CD8-positive, alpha-beta memory T cell (primary cell): ENCODE measurements at regions of chr3 and their contacts with region 1.

Region 1: DNA sequence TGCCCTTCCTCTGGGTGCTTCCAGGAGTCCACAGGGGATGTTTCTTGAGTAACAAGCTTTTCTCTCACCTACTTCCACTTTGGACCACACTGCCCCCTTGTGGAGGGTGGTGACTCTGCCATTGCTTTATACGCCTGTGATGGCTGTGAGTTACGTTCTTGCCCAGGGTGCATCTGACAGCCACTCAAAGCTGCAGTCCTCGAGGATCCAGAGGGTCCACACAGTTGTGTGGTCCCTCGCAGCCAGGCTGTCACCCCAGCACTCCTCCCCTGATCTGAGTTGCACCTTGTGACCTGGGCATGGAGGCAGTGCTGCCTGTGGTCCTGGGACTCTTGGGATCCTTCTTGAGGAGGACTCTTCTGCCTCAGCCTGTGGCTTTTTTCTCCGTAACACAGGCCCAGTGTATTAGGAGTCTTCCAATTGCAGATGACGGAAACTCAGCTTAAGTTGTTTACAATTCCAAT is 23.4 kb downstream of the FOXL2 start:
- DNase-seq: peak; percentile 68 to 85 (median 76)
- H3K4me3 ChIP-seq: no peak overlapping the region
- H3K4me3 Mint-ChIP-seq: no peak overlapping the region
- H3K27ac ChIP-seq: no peak overlapping the region
- H3K27ac Mint-ChIP-seq: no peak overlapping the region
- H3K4me1 ChIP-seq: no peaks in the 10 kb centered on the region
- H3K4me1 Mint-ChIP-seq: peaks cover 0 to 1% (median 0%) of the 10 kb centered on the region in 3 donors
- H3K27me3 ChIP-seq: no peaks in the 10 kb centered on the region
- H3K27me3 Mint-ChIP-seq: peaks cover 7 to 24% of the 10 kb centered on the region in 2 donors

Region 2: DNA sequence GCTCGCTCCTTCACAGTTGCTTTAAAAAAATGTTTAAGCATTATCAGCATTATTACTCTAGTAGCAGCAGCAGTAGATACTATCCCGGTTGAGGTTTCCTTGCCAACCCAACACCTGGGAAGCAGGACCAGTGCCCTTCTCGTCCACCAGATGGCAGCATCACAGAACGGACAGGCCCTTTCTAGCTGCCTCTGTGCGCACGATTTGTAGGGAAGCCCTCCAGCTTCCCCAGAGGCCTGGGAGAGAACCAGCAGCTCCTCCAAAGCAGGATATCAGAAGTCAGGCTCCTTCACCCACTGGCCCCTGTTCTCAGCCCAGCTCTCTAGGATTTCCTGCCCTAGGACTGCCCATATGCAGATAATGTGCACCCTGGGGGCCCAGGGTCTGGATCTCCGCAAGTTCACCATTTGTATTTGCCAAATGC is 506.0 kb before region 1 on chr3:
- CTCF ChIA-PET with region 1: interaction called, 46 read pairs
- POLR2A ChIA-PET with region 1: no interaction called
- DNase-seq: peak; percentile 17 to 67 (median 37)
- H3K4me3 ChIP-seq: no peak overlapping the region
- H3K4me3 Mint-ChIP-seq: no peak overlapping the region
- H3K27ac ChIP-seq: no peak overlapping the region
- H3K27ac Mint-ChIP-seq: no peak overlapping the region
- H3K4me1 ChIP-seq: peaks cover 4% of the 10 kb centered on the region
- H3K4me1 Mint-ChIP-seq: no peaks in the 10 kb centered on the region
- H3K27me3 ChIP-seq: peaks cover 4% of the 10 kb centered on the region
- H3K27me3 Mint-ChIP-seq: peaks cover 12 to 25% of the 10 kb centered on the region in 2 donors

Region 3: GRCh38 chr3:138694287-138695007 is 229.1 kb before region 1 on chr3:
- CTCF ChIA-PET with region 1: interaction called, 198 read pairs
- POLR2A ChIA-PET with region 1: no interaction called
- DNase-seq: no peak
- H3K4me3 ChIP-seq: no peak overlapping the region
- H3K4me3 Mint-ChIP-seq: no peak overlapping the region
- H3K27ac ChIP-seq: peak overlapping the region; percentile 33
- H3K27ac Mint-ChIP-seq: peak overlapping the region in 2 of 8 donors; percentile 24 to 26
- H3K4me1 ChIP-seq: no peaks in the 10 kb centered on the region
- H3K4me1 Mint-ChIP-seq: no peaks in the 10 kb centered on the region
- H3K27me3 ChIP-seq: no peaks in the 10 kb centered on the region
- H3K27me3 Mint-ChIP-seq: no peaks in the 10 kb centered on the region

Region 4: DNA sequence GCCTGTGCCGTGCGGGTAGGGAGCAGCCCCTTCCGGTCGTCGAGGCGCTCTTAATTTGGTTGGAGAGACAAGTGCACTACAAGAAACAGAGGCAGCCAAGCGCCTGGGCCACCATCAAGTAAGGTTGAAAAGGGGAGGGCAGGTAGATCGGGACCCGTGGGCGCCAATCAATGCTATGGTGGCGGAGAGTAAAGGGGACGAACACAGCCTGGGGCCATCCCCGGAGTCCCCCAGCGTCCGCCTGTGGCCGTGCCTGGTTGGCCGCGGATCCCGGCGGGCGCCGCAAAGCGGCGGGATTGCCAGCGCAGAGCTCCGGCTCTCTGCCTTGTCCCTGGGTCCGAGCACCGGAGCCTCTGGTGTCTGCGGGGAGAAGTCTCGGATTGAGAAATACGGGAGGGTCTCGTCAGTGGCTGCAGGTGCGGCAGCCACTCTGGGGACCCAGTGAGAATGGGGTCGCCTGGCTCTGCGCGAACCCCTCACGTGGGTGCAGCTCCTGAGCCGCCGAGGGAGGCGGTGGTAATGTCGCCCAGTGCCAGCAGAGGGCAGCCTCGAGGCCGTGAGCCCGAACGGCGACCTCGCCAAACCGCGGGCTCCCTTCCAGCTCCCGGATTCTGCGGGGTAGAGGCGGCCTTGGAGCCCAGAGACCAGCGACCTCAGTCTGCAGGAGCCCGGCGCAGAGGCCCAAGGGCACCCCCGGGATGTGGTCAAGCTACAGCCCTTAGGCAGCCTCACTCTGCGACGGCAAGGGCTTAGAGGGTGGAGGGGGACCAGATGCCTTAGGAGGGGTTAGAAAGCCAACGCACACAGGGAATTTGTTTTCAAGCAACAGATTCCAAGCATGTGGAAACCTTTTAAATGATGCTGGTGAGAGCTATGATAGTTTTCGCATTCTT is 12.5 kb after region 1 on chr3:
- CTCF ChIA-PET with region 1: interaction called, 89 read pairs
- POLR2A ChIA-PET with region 1: no interaction called
- DNase-seq: peak; percentile 54 to 72 (median 62)
- H3K4me3 ChIP-seq: peak overlapping the region; percentile 65
- H3K4me3 Mint-ChIP-seq: peak overlapping the region; percentile 67 to 80 (median 74)
- H3K27ac ChIP-seq: peak overlapping the region; percentile 7
- H3K27ac Mint-ChIP-seq: no peak overlapping the region
- H3K4me1 ChIP-seq: peaks cover 44% of the 10 kb centered on the region
- H3K4me1 Mint-ChIP-seq: peaks cover 34 to 44% (median 43%) of the 10 kb centered on the region in 3 donors
- H3K27me3 ChIP-seq: peaks cover 53% of the 10 kb centered on the region
- H3K27me3 Mint-ChIP-seq: peaks cover 71 to 84% of the 10 kb centered on the region in 2 donors

Region 5: DNA sequence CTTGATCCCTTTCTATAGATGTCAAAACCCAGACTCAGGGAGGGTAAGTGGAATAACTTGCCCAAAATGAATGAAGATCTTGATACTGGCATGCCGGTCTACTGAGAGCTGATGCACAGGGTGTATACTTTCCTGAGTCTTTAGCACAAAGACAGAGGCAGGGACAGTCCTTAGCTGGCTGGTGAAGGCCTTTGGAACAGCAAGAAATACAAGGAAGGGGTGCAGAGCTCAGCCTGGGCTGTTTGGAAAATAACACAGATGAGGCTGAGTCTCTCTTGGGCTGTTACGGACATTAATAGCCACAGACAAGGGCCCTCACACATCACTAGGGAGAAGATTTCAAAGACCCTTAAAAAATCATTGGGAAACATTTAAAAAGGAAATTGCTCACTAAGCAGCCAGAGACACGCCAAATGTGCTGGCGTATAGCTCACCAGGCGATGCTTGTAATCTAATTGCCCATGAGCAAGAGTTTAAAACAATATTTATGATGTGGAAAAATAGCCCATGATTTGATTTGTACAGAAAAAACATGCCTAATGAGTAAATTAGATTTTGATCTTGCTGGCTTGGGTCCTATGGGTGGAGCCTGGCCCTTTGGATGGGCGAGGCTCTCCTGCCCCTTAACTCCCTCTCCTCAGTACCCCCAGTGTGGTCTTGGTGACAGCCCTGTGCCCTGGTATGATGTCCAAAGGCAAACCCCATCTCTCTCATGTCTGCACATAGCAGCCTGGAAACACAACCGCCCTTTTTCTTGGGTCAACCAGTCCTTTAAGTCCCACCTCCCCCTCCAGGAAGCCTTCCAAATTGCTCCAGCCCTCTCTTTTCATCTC is 338.4 kb after region 1 on chr3:
- CTCF ChIA-PET with region 1: no interaction called
- POLR2A ChIA-PET with region 1: no interaction called
- DNase-seq: no peak
- H3K4me3 ChIP-seq: no peak overlapping the region
- H3K4me3 Mint-ChIP-seq: no peak overlapping the region
- H3K27ac ChIP-seq: no peak overlapping the region
- H3K27ac Mint-ChIP-seq: no peak overlapping the region
- H3K4me1 ChIP-seq: no peaks in the 10 kb centered on the region
- H3K4me1 Mint-ChIP-seq: no peaks in the 10 kb centered on the region
- H3K27me3 ChIP-seq: no peaks in the 10 kb centered on the region
- H3K27me3 Mint-ChIP-seq: peaks cover 10 to 18% of the 10 kb centered on the region in 2 donors

Region 6: GRCh38 chr3:139541156-139541897 is 617.8 kb after region 1 on chr3:
- CTCF ChIA-PET with region 1: no interaction called
- POLR2A ChIA-PET with region 1: no interaction called
- DNase-seq: no peak
- H3K4me3 ChIP-seq: no peak overlapping the region
- H3K4me3 Mint-ChIP-seq: no peak overlapping the region
- H3K27ac ChIP-seq: no peak overlapping the region
- H3K27ac Mint-ChIP-seq: no peak overlapping the region
- H3K4me1 ChIP-seq: no peaks in the 10 kb centered on the region
- H3K4me1 Mint-ChIP-seq: peaks cover 4 to 15% (median 4%) of the 10 kb centered on the region in 3 donors
- H3K27me3 ChIP-seq: no peaks in the 10 kb centered on the region
- H3K27me3 Mint-ChIP-seq: peaks cover 20 to 52% of the 10 kb centered on the region in 2 donors